Left ventricle myocardium inferior (tissue), 1 donor: ENCODE measurements at regions of chr2 and their contacts with region 1.

Region 1: DNA sequence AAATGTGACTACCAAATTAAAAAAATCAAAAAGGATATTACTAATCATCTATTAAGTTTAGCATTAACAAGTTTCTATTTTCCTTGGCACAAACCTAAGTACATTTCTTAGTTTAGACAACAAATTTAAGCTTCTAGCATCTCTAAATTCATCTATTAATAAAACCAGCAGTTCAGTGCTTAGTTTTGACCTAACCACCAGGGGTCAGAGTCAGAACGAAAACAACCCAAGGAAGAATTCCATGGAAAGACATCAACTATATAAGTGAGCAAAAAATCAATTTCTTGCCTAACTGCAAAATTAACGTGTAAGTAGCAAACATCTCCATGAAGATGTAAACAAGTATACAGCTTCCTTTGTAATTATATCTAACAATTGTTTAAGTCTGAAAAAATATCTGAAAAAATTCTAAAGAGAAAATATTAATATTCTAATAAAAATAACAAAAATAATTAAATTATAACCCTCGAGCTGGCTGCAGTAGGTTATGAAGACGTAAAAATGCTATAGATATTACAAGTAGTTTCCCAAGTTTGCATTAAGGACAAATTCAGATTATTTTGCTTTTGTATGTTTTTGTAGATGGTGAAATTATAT is 83.7 kb downstream of the CERKL start:
- DNase-seq: no peak
- H3K4me3 ChIP-seq: no peak overlapping the region
- H3K27ac ChIP-seq: no peak overlapping the region
- H3K4me1 ChIP-seq: no peaks in the 10 kb centered on the region
- H3K27me3 ChIP-seq: peaks cover 24% of the 10 kb centered on the region
- CTCF ChIP-seq: peak; percentile 55

Region 2: GRCh38 chr2:181715033-181715630 is 141.9 kb after region 1 on chr2:
- intact Hi-C with region 1: loop called (anchors 5 kb)
- DNase-seq: peak; percentile 19
- H3K4me3 ChIP-seq: no peak overlapping the region
- H3K27ac ChIP-seq: no peak overlapping the region
- H3K4me1 ChIP-seq: no peaks in the 10 kb centered on the region
- H3K27me3 ChIP-seq: no peaks in the 10 kb centered on the region
- CTCF ChIP-seq: peak; percentile 74